AG04449 (cell line): ENCODE measurements at regions of chr2 and their contacts with region 1.

Region 1: DNA sequence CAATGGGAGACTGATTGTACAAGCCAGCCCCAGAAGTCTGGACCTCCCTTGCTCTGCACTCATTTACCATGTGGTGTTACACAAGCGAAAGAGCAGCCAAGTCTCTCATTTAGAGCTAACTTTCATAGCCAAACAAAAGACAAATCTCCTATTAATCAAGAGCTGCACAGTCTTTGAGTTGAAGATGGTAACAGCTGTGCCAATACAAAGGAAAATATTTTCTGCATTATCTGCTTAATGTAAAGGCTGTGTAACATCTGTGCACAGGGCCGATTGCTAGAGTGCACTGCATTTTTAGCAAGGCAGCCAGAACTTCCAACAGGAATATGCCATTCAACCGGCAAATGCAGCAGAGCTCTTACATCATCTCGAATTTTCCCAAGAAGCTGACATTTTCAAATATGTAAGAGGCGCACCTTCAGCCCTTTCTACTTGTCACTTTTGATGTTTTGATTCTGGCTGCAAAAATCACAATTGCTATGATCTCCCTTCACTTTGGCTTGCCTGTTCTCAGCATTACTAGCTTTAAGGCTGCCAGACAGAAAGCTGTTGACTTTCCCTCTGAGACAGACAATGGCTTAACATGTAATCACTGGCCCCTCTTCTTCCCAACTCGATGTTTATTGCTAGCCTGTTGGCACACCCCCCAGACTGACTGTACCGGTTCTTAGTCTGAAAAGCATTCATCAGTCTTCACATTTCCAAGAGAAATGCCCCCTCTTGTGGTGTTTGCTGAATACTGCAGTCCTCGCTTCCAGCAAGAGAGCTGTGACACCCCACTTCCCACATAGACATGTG is 96.9 kb upstream of the TANK start:
- DNase-seq: peak; percentile 40
- H3K4me3 ChIP-seq: peak overlapping the region; percentile 23; the same call in 1 of the 2 replicates
- CTCF ChIP-seq: peak; percentile 75

Region 2: GRCh38 chr2:160087854-160088745 is 975.3 kb before region 1 on chr2:
- CTCF ChIA-PET with region 1: interaction called, 10 read pairs
- POLR2A ChIA-PET with region 1: no interaction called
- DNase-seq: no peak
- H3K4me3 ChIP-seq: no peak overlapping the region
- CTCF ChIP-seq: no peak

Region 3: DNA sequence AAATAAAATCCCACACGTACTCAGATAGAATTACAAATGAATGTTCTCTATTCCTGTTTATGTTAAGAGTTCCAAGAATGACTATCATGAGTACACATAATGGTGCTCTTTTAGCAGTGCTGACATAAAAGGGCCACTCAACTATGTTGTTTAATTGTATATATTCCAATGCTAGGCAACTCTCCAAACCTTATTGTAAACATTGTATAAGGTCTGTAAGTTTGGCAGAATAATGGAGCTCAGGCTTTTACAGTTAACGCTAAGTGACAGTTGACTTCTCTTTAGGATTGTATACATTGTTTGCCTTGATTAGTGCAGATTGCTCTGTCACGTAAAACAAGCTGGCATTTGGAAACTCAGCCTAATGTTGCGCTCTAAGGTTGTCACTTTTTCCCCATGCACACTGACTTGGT is 590.5 kb before region 1 on chr2:
- CTCF ChIA-PET with region 1: no interaction called
- POLR2A ChIA-PET with region 1: no interaction called
- DNase-seq: peak; percentile 19
- H3K4me3 ChIP-seq: no peak overlapping the region
- CTCF ChIP-seq: no peak

Region 4: GRCh38 chr2:160522951-160523710 is 540.2 kb before region 1 on chr2:
- CTCF ChIA-PET with region 1: no interaction called
- POLR2A ChIA-PET with region 1: no interaction called
- DNase-seq: no peak
- H3K4me3 ChIP-seq: no peak overlapping the region
- CTCF ChIP-seq: no peak

Region 5: GRCh38 chr2:160561551-160562295 is 501.6 kb before region 1 on chr2:
- CTCF ChIA-PET with region 1: no interaction called
- POLR2A ChIA-PET with region 1: no interaction called
- DNase-seq: peak; percentile 46
- H3K4me3 ChIP-seq: no peak overlapping the region
- CTCF ChIP-seq: no peak

Region 6: GRCh38 chr2:160977376-160977775 is 86.0 kb before region 1 on chr2:
- CTCF ChIA-PET with region 1: interaction called, 10 read pairs
- POLR2A ChIA-PET with region 1: no interaction called
- DNase-seq: no peak
- H3K4me3 ChIP-seq: no peak overlapping the region
- CTCF ChIP-seq: no peak

Region 7: DNA sequence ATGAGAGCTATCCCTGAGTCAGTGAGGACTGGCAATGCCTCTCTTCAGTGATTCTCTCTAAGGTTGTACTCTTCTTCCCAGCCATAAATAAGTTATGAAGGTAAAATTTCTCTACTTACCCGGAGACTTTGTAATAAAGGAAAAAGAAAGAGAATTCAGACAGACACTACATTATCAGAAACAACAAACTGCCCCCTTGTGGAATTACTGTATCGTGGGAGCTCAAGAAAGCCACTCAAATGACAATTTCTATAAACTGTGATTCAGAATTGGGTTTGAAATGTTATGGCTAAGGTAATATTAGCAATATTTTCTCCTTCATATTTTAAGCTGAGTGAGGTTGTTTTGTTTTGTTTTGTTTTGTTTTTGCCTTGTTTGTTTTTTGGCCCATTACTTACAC is 59.0 kb before region 1 on chr2:
- CTCF ChIA-PET with region 1: interaction called, 20 read pairs
- POLR2A ChIA-PET with region 1: no interaction called
- DNase-seq: no peak
- H3K4me3 ChIP-seq: no peak overlapping the region
- CTCF ChIP-seq: peak; percentile 31

Region 8: DNA sequence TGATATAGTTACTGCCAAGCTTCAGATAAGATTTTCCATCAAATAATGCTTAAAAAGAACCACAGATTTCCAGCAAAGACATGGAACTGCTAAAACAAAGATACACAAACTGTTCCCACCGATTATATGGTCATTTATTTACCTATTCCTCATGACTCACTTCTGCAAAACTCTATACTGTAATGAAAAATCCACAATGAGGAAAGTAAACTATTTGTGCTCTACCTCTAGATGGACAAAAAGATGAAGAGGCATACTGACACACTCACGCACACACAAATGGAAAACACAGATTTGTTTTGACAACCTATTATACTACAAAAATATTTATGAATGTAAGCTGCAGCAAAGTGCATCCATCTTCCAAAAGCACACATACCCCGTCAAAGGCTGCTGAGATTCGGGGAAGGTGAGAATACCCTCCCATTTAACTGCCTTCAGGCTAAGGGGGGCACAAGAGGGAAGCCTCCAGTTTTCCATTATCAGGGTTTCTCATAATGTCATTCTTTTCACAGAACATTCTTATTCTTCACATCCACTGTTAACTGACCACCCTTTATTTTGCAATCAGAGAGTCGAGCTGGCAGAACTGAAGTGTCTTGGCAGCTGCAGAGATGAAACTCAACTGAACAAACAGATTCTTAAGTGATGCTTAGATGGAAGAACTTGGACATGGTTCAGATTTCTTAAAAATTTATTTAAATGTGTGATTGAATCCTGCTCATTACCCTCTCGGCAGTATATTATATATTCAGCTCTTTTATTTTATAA is 19.1 kb before region 1 on chr2:
- CTCF ChIA-PET with region 1: interaction called, 39 read pairs
- POLR2A ChIA-PET with region 1: no interaction called
- DNase-seq: no peak
- H3K4me3 ChIP-seq: no peak overlapping the region
- CTCF ChIP-seq: no peak

Region 9: DNA sequence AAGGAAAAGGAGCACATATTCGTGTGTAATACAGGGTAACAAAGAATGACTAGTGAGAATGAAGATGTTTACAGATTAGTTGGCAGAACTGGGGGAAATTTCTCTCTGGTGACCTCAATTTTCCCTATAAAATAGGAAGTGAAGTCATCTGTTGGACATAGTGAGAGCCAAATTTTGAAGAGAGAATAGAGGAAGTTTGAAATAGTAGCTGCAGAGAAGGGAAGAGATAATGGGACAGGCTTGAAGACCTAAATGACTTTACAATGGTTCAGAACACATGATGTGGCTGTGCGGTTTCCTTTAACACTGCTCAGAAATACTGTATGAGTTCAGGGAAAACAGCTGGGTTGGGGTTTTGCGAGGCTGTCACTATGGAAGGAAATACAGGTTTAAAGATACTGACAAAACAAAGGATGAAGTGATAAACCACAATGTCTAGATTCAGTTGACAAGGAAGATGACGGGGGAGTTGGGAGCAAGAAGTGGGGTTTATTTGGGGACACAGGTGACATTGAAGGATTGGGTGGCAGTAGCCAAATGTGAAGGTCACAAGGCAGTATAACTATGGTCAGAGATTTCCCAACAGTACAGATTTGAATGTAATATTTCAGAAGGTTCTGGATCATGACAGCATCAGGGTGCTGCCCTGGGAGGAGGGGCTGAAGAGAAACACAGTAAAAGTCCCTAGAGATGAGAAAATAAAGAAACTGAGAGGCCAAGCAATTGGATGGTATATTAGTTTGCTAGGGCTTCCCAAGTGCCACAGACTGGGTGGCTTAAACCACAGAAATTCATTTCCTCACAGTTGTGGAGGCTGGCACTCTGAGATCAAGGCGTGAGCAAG is 14.2 kb after region 1 on chr2:
- CTCF ChIA-PET with region 1: interaction called, 79 read pairs
- POLR2A ChIA-PET with region 1: no interaction called
- DNase-seq: no peak
- H3K4me3 ChIP-seq: no peak overlapping the region
- CTCF ChIP-seq: no peak